ENCODE measurements at regions of chr4 and their contacts with region 1.

Region 1: DNA sequence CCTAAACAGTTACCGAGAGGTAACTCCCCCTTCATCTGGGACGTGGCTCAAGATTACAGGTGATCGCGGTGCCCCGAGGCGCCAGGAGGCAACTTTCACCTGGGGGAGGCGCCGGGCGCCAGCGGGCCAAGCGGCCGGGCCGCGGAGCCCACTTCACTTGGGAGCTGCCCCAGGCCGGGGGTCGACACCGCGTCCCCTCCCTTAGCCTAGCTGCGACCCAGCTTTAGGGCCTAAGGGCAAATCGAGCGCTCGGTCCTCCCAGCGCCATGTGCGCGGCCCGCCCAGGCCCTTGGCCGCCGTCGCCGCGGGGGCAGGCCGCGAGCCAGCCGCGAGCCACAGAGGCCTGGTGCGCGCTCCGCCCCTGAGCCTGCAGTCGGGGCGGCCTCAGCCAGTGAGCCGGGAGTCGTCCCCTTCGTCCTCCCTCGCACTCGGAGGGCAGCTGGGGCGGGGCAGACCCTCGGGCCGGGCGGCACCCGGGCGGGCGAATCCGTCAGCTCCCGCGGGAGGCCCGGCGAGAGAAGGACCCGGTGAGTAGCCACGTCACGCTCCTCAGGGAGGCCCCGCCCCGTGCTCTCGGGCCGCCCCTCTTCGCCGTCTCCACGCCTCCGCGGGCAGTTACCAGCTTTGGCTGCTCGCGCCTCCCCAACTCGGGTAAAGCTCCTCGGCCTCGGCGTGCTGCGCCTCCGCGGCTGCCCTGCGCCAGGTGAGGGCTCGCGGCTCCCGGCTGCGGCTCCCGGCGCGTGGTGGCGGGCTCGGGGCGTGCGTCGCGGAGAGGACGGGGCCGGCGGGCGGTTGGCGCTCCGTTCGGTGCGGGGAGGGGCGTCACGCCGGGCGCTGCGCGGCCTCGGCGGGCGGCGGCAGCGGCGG is at the start of gene LARP1B:
- DNase-seq: peak; percentile 90 to 93 (median 92)
- H3K4me3 ChIP-seq: peak within 1 kb of the TSS; percentile 74 to 76
- H3K4me3 Mint-ChIP-seq: peak within 1 kb of the TSS; percentile 86 to 91 (median 88)
- H3K27ac ChIP-seq: peak within 1 kb of the TSS; percentile 85
- H3K27ac Mint-ChIP-seq: peak within 1 kb of the TSS; percentile 90 to 96 (median 91)
- H3K4me1 ChIP-seq: peaks cover 17% of the 10 kb centered on the region
- H3K4me1 Mint-ChIP-seq: peaks cover 10 to 17% (median 13%) of the 10 kb centered on the region in 4 donors
- H3K27me3 ChIP-seq: no peaks in the 10 kb centered on the region
- H3K27me3 Mint-ChIP-seq: no peaks in the 10 kb centered on the region
- total RNA-seq, gene LARP1B: 15.8 to 19.1 TPM

Region 2: GRCh38 chr4:127880764-127881562 is 180.0 kb before region 1 on chr4 and contains the start of gene PLK4:
- CTCF ChIA-PET with region 1: no interaction called
- POLR2A ChIA-PET with region 1: interaction called, 15 read pairs
- intact Hi-C with region 1: loop called (anchors 1 kb)
- DNase-seq: peak; percentile 92 to 95 (median 93)
- H3K4me3 ChIP-seq: peak within 1 kb of the TSS; percentile 79 to 93
- H3K4me3 Mint-ChIP-seq: peak within 1 kb of the TSS; percentile 96 to 100 (median 97)
- H3K27ac ChIP-seq: peak within 1 kb of the TSS; percentile 68
- H3K27ac Mint-ChIP-seq: peak within 1 kb of the TSS; percentile 96 to 100 (median 98)
- H3K4me1 ChIP-seq: peaks cover 14% of the 10 kb centered on the region
- H3K4me1 Mint-ChIP-seq: peaks cover 8 to 28% (median 18%) of the 10 kb centered on the region in 4 donors
- H3K27me3 ChIP-seq: no peaks in the 10 kb centered on the region
- H3K27me3 Mint-ChIP-seq: no peaks in the 10 kb centered on the region
- total RNA-seq, gene PLK4: 1.1 to 2.6 TPM

Region 3: DNA sequence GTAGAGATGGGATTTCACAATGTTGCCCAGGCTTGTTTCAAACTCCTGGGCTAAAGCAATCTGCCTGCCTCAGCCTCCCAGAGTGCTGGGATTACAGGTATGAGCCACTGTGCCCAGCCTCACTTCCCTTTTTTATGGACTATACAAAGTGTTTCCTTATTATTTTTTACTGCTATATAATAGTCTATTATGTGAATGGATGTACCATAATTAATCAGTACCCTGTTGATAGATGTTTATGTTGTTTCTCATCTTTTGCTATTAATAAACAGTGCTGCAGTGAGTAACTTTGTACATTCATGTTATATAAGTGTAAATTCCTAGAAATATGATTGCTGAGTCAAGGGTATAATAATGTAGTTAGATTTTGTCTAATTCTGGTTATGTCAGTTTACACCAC is 35.6 kb before region 1 on chr4:
- CTCF ChIA-PET with region 1: no interaction called
- POLR2A ChIA-PET with region 1: interaction called, 3 read pairs
- intact Hi-C with region 1: loop called (anchors 5 kb)
- DNase-seq: no peak
- H3K4me3 ChIP-seq: no peak overlapping the region
- H3K4me3 Mint-ChIP-seq: no peak overlapping the region
- H3K27ac ChIP-seq: no peak overlapping the region
- H3K27ac Mint-ChIP-seq: peak overlapping the region in 1 of 7 donors; percentile 39
- H3K4me1 ChIP-seq: no peaks in the 10 kb centered on the region
- H3K4me1 Mint-ChIP-seq: no peaks in the 10 kb centered on the region
- H3K27me3 ChIP-seq: no peaks in the 10 kb centered on the region
- H3K27me3 Mint-ChIP-seq: no peaks in the 10 kb centered on the region

Region 4: GRCh38 chr4:128287871-128288688 is 227.1 kb after region 1 on chr4:
- CTCF ChIA-PET with region 1: no interaction called
- POLR2A ChIA-PET with region 1: interaction called, 20 read pairs
- intact Hi-C with region 1: loop called (anchors 1 kb)
- DNase-seq: peak; percentile 97 to 100 (median 99)
- H3K4me3 ChIP-seq: peak overlapping the region; percentile 33 to 87
- H3K4me3 Mint-ChIP-seq: peak overlapping the region; percentile 81 to 91 (median 88)
- H3K27ac ChIP-seq: peak overlapping the region; percentile 88
- H3K27ac Mint-ChIP-seq: peak overlapping the region; percentile 80 to 97 (median 96)
- H3K4me1 ChIP-seq: peaks cover 43% of the 10 kb centered on the region
- H3K4me1 Mint-ChIP-seq: peaks cover 24 to 42% (median 31%) of the 10 kb centered on the region in 4 donors
- H3K27me3 ChIP-seq: no peaks in the 10 kb centered on the region
- H3K27me3 Mint-ChIP-seq: no peaks in the 10 kb centered on the region

Region 5: DNA sequence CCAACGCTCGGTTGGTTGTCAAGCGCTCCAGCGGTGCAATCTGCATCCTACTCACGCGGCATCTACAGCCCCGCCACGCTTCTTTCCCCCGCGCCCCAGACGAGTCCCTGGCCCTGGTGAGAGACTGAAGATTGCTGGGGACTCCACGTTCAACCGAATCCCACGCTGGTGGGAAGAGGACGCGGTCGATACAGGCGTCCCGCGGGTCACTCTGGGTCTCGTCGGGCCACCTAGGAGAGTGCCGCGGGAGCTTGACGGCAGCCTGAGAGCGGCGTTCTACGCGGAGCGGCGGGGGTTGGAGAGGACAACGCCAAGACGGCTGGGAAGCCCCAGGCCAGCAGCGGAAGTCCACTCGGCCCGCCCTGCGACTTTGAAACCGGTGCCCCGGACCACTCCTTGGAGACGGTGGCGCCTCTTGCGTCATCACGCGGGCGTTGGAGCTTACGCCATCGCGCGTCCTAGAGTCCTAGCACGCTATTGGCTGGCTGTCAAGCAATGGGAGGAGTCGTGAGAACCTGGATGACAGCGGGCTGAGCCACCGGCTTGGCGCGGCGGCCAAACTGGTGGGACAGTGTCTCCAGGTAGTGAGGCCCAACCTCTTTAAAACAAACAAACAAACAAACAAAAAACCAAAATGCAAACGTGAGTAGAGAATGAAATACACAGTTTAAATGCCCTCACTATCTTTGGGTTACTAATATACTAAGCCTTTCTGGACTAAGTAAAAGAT is 1032.4 kb after region 1 on chr4 and contains the start of gene SCLT1:
- CTCF ChIA-PET with region 1: interaction called, 3 read pairs
- POLR2A ChIA-PET with region 1: interaction called, 5 read pairs
- intact Hi-C with region 1: loop called (anchors 2 kb)
- DNase-seq: peak; percentile 93 to 98 (median 95)
- H3K4me3 ChIP-seq: peak within 1 kb of the TSS; percentile 71 to 98
- H3K4me3 Mint-ChIP-seq: peak within 1 kb of the TSS in 6 of 8 donors; percentile 10 to 57 (median 30)
- H3K27ac ChIP-seq: peak within 1 kb of the TSS; percentile 99
- H3K27ac Mint-ChIP-seq: peak within 1 kb of the TSS in 2 of 7 donors; percentile 33 to 95
- H3K4me1 ChIP-seq: peaks cover 63% of the 10 kb centered on the region
- H3K4me1 Mint-ChIP-seq: peaks cover 30 to 47% (median 38%) of the 10 kb centered on the region in 4 donors
- H3K27me3 ChIP-seq: no peaks in the 10 kb centered on the region
- H3K27me3 Mint-ChIP-seq: no peaks in the 10 kb centered on the region
- total RNA-seq, gene SCLT1: 18.2 to 20.8 TPM

Measured in CD4-positive, alpha-beta memory T cell (primary cell).